ENCODE measurements at regions of chr15 and their contacts with region 1.

Region 1: GRCh38 chr15:25641361-25641760 is 202.5 kb upstream of the UBE3A start:
- DNase-seq: no peak
- ATAC-seq: no peak
- H3K4me3 ChIP-seq: no peak overlapping the region
- H3K27ac ChIP-seq: no peak overlapping the region
- H3K4me1 ChIP-seq: no peaks in the 10 kb centered on the region
- H3K27me3 ChIP-seq: peaks cover 41% of the 10 kb centered on the region
- CTCF ChIP-seq: no peak

Region 2: DNA sequence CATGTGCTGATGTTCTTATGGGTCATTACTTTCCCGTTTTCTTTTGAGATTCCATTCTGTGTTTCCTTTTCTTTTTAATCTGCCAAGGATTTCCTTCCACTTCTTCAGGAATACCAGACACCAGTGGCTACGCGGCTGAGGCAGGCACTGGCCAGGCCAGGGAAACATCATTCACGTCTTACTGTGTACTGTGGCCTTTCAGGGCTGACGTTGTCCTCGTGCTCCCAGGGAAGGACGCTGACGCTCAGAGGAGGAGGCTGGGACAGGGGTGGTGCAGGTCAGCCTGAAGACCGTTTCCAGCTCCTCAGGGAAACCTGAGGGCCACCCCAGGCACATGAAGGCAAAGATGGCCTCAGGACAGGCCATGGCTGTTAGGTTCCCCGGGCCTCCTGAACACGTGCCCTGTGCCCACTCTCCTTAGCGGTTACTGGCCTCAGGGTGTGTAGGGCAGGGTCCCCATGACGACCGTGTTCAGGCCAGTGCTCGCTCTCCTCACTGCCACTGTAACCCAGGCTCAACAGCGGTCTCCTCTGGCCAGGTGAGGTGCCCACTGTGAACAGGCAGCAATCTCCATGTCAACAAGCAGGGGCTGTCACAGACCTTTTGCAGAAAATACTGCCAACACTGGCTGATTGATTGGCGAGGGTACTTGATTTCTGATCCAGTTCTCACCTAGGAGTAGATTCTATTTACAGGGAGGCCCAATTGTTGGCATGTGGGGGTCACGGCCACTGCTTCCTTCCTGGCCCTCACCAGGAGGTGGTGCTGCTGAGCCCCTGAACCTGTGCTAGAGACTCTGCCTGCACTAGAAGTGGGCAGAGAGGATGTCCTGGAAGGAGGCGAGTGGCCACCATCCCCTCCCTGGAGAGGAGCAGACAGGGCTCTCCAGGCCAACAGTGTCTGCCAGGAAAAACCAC is 52.2 kb after region 1 on chr15:
- CTCF ChIA-PET with region 1: no interaction called
- POLR2A ChIA-PET with region 1: no interaction called
- intact Hi-C with region 1: no loop called
- DNase-seq: peak; percentile 30
- ATAC-seq: peak; percentile 38; the same call in 1 of the 2 replicates
- H3K4me3 ChIP-seq: no peak overlapping the region
- H3K27ac ChIP-seq: no peak overlapping the region
- H3K4me1 ChIP-seq: 0 out of 2 replicates have a peak, but pooled peaks cover 6% of the 10 kb centered on the region
- H3K27me3 ChIP-seq: no peaks in the 10 kb centered on the region
- CTCF ChIP-seq: peak; percentile 62

Region 3: GRCh38 chr15:26453914-26454313 is 812.6 kb after region 1 on chr15:
- CTCF ChIA-PET with region 1: no interaction called
- POLR2A ChIA-PET with region 1: interaction called, 11 read pairs
- intact Hi-C with region 1: no loop called
- DNase-seq: no peak
- ATAC-seq: no peak
- H3K4me3 ChIP-seq: no peak overlapping the region
- H3K27ac ChIP-seq: no peak overlapping the region
- H3K4me1 ChIP-seq: no peaks in the 10 kb centered on the region
- H3K27me3 ChIP-seq: peaks cover 7% of the 10 kb centered on the region; the same call in 1 of the 2 replicates
- CTCF ChIP-seq: no peak